ENCODE measurements at regions of chr5 and their contacts with region 1.

Region 1: DNA sequence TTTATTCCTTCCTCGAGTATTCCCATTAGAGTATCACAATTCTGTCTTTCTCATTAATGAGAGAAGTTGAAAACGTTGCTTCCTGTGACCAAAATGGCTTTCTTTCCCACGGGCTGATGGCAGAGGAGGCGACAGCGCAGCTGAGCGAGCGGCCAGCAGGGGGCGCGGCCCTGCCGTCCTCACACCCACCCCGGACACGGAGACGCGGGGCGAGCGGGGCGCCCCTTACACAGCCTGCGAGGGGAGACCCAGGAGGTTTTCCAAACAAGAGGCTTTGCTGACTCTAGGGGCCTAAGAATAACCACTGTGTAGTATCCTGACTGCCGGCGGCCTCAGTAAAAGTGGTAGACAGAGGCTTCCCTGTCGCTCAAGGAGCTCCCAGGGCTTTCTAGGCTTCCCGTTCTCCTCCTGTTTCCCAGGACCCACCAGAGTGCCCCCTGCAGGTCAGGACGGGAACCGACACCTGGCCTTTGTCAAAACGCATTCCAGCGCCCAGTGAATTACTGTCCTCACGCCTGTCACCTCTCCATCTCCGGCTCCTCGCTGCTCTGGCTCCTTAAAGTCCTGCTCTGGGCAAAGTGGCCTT is 27.3 kb upstream of the FGF1 start:
- DNase-seq: peak; percentile 95
- H3K4me3 Mint-ChIP-seq: peak overlapping the region; percentile 77
- H3K27ac Mint-ChIP-seq: peak overlapping the region; percentile 10
- H3K4me1 Mint-ChIP-seq: peaks cover 19% of the 10 kb centered on the region
- H3K27me3 Mint-ChIP-seq: no peaks in the 10 kb centered on the region
- CTCF ChIP-seq: peak; percentile 99

Region 2: DNA sequence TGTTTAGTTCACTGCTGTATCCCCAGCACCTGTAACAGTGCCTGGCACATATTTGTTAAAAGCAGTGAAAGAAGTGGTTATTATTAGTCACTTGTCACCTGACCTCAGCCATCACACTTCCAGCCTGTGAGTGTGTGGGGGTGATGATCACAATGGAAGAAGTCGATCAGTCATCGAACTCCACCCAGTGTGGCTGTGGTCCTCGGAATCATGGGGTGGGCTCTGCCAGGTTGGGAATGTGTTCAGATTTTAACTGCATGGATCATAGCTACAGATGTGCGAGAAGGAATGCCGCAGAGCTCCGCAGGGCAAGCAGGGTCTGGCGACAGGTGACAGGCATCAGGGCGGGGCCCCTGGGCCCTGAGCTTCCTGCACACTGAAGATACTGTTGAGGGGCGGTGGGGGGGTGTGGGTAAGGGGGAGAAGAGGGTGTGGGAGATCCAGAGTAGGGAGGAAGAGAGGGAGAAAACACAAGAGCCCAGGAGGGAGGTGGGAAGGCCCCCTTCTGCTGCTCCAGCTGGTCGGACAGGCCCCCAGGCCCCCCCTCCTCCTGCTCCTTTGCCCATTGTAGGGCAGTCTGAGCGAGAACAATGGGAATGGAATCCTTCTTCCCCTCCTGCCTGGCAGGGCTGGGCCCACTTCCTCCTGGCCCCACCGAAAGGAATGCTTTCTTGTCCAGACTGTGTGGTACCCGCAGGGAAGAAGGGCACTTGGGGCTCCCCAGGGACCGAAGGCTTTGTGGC is 478.0 kb before region 1 on chr5:
- CTCF ChIA-PET with region 1: no interaction called
- POLR2A ChIA-PET with region 1: no interaction called
- intact Hi-C with region 1: no loop called
- DNase-seq: no peak
- H3K4me3 Mint-ChIP-seq: no peak overlapping the region
- H3K27ac Mint-ChIP-seq: no peak overlapping the region
- H3K4me1 Mint-ChIP-seq: peaks cover 5% of the 10 kb centered on the region
- H3K27me3 Mint-ChIP-seq: no peaks in the 10 kb centered on the region
- CTCF ChIP-seq: no peak

Region 3: DNA sequence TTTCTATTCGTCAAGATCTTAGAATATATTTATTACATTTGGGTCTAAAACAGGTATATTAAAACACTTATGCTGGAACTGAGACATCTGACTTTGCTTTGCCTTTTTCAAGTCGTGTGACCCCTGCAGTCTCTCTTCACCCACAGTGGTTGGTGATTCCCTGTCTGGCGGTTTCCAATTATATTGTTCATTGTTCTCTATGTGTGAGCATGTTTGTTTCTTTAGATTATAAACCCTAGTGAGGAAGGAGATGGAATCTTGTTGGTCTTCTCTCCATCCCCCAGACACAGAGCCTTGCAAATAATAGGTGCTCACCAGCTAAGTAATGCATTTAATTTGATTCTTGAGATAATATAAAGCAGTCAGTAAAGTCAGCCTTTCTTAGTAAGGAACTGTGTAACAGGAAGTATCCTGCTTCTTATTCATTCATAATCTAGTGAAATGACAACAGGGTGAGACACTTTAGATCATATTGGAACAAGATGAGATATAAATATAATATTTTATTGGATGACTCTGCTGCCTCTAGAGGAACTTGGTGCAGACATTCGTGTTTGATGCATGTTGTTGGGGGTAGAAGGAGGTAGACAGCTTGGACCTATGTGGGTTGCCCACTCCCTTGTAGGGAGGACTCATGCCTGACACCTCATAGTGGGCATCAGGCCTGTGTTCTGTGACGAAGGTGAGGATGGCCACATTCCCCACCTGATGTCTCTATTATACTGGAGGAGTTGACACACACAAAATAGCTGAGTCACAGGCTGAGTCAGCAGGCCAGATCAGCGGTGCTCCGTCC is 115.5 kb before region 1 on chr5:
- CTCF ChIA-PET with region 1: interaction called, 16 read pairs
- POLR2A ChIA-PET with region 1: no interaction called
- intact Hi-C with region 1: no loop called
- DNase-seq: peak; percentile 89
- H3K4me3 Mint-ChIP-seq: no peak overlapping the region
- H3K27ac Mint-ChIP-seq: no peak overlapping the region
- H3K4me1 Mint-ChIP-seq: peaks cover 16% of the 10 kb centered on the region
- H3K27me3 Mint-ChIP-seq: no peaks in the 10 kb centered on the region
- CTCF ChIP-seq: peak; percentile 20

Region 4: DNA sequence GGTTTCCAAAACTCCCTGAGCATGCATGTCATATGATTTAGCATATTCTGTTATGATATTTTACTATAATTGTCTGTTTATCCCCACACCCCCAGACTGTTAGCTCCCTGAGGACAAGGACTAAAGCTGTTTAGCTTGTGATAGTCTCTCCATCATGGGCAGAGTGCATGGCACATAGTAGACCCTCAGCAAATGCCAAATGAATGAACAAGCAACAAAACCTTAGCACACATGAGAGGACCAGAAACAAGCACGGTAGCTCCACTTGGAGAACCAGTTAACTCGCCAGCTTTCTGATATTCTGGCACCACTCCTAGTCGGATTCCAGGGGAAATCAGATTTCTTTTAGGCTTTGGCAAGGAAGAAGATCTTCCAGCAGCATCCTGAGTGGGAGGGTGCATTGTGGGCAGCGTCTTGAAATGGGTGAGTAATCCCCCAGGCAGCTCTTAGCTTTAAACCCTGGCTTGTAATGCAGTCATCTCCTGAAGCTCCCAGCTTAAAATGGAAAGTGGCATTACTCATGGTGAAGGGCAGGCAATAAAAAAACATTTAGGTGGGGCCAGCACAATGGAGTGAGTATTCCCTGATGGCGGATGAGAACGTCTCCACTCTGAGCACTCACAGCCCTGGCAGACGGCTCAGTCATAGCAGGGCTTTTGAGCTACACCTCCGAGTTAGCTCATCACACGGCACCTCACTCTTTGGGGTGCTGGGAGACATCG is 68.4 kb before region 1 on chr5:
- CTCF ChIA-PET with region 1: interaction called, 1,243 read pairs
- POLR2A ChIA-PET with region 1: no interaction called
- intact Hi-C with region 1: no loop called
- DNase-seq: peak; percentile 99
- H3K4me3 Mint-ChIP-seq: peak overlapping the region; percentile 48
- H3K27ac Mint-ChIP-seq: peak overlapping the region; percentile 85
- H3K4me1 Mint-ChIP-seq: peaks cover 26% of the 10 kb centered on the region
- H3K27me3 Mint-ChIP-seq: no peaks in the 10 kb centered on the region
- CTCF ChIP-seq: no peak

Region 5: DNA sequence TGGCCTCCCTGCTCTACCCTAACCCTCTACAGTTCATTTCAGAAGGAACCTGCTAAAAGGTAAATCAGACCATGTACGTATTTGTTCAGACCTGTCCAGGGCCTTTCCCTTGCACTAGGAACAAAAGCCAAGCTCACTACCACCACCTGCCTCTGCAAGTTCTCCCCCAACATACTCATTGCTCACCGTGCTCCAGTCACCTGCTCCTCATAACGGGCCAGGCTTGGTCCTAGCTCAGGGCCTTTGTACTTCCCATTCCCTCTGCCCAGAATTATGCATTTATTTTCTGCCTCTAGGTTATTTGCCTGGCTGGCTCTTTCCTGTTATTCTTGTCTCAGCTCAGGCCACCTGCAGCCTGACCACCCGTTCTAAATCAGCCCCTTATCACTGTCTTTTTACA is 22.5 kb before region 1 on chr5:
- CTCF ChIA-PET with region 1: interaction called, 1,243 read pairs
- POLR2A ChIA-PET with region 1: interaction called, 6 read pairs
- intact Hi-C with region 1: no loop called
- DNase-seq: peak; percentile 50
- H3K4me3 Mint-ChIP-seq: no peak overlapping the region
- H3K27ac Mint-ChIP-seq: no peak overlapping the region
- H3K4me1 Mint-ChIP-seq: peaks cover 23% of the 10 kb centered on the region
- H3K27me3 Mint-ChIP-seq: no peaks in the 10 kb centered on the region
- CTCF ChIP-seq: no peak

Region 6: DNA sequence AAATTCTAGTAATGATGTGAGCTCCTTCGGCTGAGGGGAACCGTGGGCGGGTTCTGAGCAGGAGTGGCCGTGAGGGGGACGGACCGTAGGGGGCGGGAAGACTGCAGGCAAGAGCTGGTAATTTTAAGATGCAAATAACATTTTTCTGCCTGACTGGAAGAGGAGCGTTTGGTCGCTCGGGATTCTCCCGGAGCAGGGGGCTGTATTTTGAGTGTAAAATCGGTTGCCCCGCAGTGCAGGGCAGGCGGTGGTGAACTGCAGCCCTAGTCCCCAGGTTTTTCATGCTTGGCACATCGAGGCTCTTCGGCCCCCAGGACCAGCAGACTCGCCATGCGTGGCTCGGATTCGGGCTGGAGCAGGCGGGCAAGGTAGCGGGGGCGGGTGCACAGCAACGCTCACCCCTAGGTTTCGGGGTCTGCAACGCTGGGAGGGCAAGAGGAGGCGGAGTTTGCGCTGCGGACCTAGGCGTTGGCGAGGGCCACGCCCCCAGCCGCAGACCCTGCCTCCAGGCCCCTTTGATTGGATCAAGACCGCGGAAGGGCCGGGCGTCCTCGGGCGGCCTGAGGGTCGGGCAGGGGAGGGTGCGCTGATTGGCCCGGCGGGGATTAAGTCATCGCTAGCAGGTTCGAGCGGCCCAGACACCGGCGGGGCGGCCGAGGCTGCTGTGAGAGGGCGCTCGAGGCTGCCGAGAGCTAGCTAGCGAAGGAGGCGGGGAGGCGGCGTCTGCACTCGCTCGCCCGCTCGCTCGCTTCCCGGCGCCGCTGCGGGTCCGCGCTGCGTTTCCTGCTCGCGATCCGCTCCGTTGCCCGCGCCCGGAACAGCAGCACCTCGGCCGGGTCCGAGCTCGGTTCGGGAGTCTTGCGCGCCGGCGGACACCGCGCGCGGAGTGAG is 56.8 kb after region 1 on chr5 and contains the start of gene ARHGAP26:
- CTCF ChIA-PET with region 1: interaction called, 143 read pairs
- POLR2A ChIA-PET with region 1: interaction called, 5 read pairs
- intact Hi-C with region 1: no loop called
- DNase-seq: peak; percentile 99
- H3K4me3 Mint-ChIP-seq: peak within 1 kb of the TSS; percentile 95
- H3K27ac Mint-ChIP-seq: peak within 1 kb of the TSS; percentile 33
- H3K4me1 Mint-ChIP-seq: peaks cover 21% of the 10 kb centered on the region
- H3K27me3 Mint-ChIP-seq: no peaks in the 10 kb centered on the region
- CTCF ChIP-seq: peak; percentile 30
- total RNA-seq, gene ARHGAP26: 54.3 and 58.9 TPM in 2 replicates

Region 7: GRCh38 chr5:142874537-142874936 is 161.3 kb after region 1 on chr5:
- CTCF ChIA-PET with region 1: interaction called, 1,942 read pairs
- POLR2A ChIA-PET with region 1: interaction called, 33 read pairs
- intact Hi-C with region 1: no loop called
- DNase-seq: peak; percentile 99
- H3K4me3 Mint-ChIP-seq: no peak overlapping the region
- H3K27ac Mint-ChIP-seq: peak overlapping the region; percentile 32
- H3K4me1 Mint-ChIP-seq: peaks cover 73% of the 10 kb centered on the region
- H3K27me3 Mint-ChIP-seq: no peaks in the 10 kb centered on the region
- CTCF ChIP-seq: no peak

Region 8: GRCh38 chr5:142915813-142916424 is 202.7 kb after region 1 on chr5:
- CTCF ChIA-PET with region 1: interaction called, 180 read pairs
- POLR2A ChIA-PET with region 1: no interaction called
- intact Hi-C with region 1: loop called (anchors 1 kb)
- DNase-seq: peak; percentile 78
- H3K4me3 Mint-ChIP-seq: no peak overlapping the region
- H3K27ac Mint-ChIP-seq: no peak overlapping the region
- H3K4me1 Mint-ChIP-seq: peaks cover 7% of the 10 kb centered on the region
- H3K27me3 Mint-ChIP-seq: no peaks in the 10 kb centered on the region
- CTCF ChIP-seq: peak; percentile 79

Region 9: GRCh38 chr5:144276044-144276822 is 1563.0 kb after region 1 on chr5:
- CTCF ChIA-PET with region 1: no interaction called
- POLR2A ChIA-PET with region 1: no interaction called
- intact Hi-C with region 1: no loop called
- DNase-seq: no peak
- H3K4me3 Mint-ChIP-seq: no peak overlapping the region
- H3K27ac Mint-ChIP-seq: no peak overlapping the region
- H3K4me1 Mint-ChIP-seq: no peaks in the 10 kb centered on the region
- H3K27me3 Mint-ChIP-seq: no peaks in the 10 kb centered on the region
- CTCF ChIP-seq: no peak